ENCODE measurements at regions of chr2 and their contacts with region 1.

Region 1: GRCh38 chr2:148020111-148021058 is at the start of gene ORC4:
- DNase-seq: peak; percentile 88 to 99 (median 95)
- ATAC-seq: peak; percentile 84 to 85
- H3K4me3 Mint-ChIP-seq: peak within 1 kb of the TSS; percentile 90 to 100 (median 98)
- H3K27ac Mint-ChIP-seq: peak within 1 kb of the TSS; percentile 92 to 99 (median 98)
- H3K4me1 Mint-ChIP-seq: peaks cover 34 to 82% (median 73%) of the 10 kb centered on the region in 4 donors
- H3K27me3 Mint-ChIP-seq: no peaks in the 10 kb centered on the region
- polyA plus RNA-seq, gene ORC4: 40.9 to 51.8 (median 48.8) TPM

Region 2: GRCh38 chr2:147843864-147844696 is 176.3 kb before region 1 on chr2:
- POLR2A ChIA-PET with region 1: interaction called, 11 read pairs
- DNase-seq: peak; percentile 74 to 92 (median 86)
- ATAC-seq: peak; percentile 81
- H3K4me3 Mint-ChIP-seq: peak overlapping the region; percentile 89 to 98 (median 96)
- H3K27ac Mint-ChIP-seq: peak overlapping the region; percentile 52 to 95 (median 87)
- H3K4me1 Mint-ChIP-seq: peaks cover 22 to 47% (median 36%) of the 10 kb centered on the region in 4 donors
- H3K27me3 Mint-ChIP-seq: peaks cover 6 to 16% (median 8%) of the 10 kb centered on the region in 5 donors

Region 3: DNA sequence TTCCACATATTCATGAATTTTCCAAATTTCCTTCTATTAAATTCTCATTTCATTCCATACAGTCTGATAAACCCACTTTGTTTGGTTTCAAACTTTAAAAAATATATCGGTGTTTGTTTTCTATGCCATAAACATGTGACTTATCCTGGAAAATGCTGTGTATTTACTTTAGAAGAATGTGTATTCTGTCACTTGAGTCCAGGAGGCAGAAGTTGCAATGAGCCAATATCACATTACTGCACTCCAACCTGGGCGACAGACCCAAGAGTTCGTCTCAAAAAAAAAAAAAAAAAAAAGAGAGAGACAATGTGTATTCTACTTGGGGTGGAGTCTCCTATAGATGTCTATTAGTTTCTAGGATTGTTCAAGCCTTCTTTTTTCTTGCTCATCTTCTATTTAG is 32.3 kb after region 1 on chr2:
- POLR2A ChIA-PET with region 1: no interaction called
- DNase-seq: no peak
- ATAC-seq: no peak
- H3K4me3 Mint-ChIP-seq: no peak overlapping the region
- H3K27ac Mint-ChIP-seq: peak overlapping the region in 1 of 10 donors; percentile 39
- H3K4me1 Mint-ChIP-seq: peaks cover 13 to 44% (median 35%) of the 10 kb centered on the region in 4 donors
- H3K27me3 Mint-ChIP-seq: no peaks in the 10 kb centered on the region

Measured in naive thymus-derived CD8-positive, alpha-beta T cell (primary cell).